Activated T-helper 1 cell treated with anti-CD3 and anti-CD28 coated beads, Interleukin-12 subunit alpha, Interleukin-12 subunit beta, Interleukin-2, Interleukin-4 antibody, amounts not matched to agents 30 ng/mL and 10 ng/mL and 1 ng/mL, durations not matched to agents 14 hours and 24 hours and 36 hours (primary cell): ENCODE measurements at regions of chr2 and their contacts with region 1.

Region 1: DNA sequence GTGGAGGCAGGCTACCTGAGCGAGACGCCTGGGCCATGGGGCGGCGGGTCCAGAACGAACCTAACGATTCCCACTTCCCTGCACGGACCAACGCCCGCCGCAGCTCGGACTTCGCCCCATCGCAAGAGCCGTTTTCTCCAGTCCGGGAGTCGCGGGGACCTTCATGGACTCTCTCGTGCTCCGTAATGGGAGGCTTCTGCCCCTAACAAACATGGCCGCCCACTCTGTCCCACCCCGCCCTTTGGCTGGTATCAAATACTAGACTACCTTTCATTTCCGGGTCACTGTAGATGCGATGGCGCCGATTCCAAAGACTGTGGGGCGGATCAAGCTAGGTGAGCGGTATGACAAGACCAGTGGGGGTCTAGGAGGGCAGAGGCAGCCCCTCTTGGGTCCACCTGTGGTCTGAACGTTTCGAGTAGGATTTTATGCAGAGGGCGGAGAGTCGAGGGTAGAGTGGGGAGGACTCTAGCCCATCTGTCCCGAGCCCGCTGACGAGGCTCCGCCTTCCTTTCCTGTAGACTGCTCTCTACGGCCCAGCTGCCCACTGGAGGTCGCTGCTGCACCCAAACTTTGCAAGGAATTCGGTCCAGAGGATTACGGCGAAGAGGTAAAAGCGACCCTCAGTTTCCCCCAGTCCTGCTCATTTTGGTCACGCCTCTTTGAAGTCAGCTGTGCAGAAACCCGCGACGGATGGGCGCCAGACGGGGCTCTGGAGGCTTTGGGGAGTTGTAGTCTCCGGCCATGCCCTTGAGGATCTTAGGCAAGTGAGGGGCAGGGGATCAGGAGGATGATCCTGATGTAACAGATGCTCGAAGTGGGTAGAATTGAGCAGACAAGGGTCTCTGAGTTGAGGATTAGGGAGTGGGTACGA is at the starts of genes CCDC142 and TTC31:
- DNase-seq: peak; percentile 89
- H3K4me3 Mint-ChIP-seq: peak within 1 kb of the TSS; percentile 99
- H3K27ac Mint-ChIP-seq: peak within 1 kb of the TSS; percentile 99
- H3K4me1 Mint-ChIP-seq: peaks cover 35% of the 10 kb centered on the region
- H3K27me3 Mint-ChIP-seq: no peaks in the 10 kb centered on the region
- total RNA-seq, gene CCDC142: 30.4 and 36.3 TPM in 2 replicates
- total RNA-seq, gene TTC31: 30.2 and 32.2 TPM in 2 replicates

Region 2: DNA sequence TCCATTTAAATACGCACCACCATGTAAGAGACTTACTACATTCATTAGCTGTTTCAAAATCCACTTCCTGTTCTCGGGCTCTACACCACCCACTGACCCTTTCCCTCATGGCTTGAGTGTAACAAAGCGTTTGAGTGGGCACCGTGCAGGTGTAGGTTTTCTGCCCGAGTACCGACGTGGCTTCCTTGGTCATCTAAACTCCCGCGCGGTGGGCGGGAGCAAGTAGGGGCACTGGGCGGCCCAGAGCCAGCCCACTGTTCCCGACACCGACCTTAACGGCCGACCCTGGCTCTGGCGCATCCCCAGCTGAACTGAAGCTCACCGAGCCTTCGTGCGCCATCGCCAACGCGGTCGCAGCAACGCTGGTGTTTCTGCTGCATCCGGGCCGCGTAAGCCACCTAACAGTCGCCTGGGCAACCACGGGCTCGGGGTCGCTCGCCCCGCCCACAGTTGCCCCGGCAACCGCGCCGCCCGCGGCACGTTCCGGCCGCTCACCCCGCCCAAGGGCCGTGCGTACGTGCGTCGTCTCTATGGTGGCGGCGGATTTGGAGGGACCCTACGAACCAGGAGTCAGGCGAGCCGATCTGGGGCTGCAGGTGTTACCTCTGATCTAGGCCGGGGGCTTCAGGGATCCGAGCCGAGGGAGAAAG is 61.7 kb before region 1 on chr2 and contains the starts of genes C2orf81 and WDR54:
- intact Hi-C with region 1: loop called (anchors 1 kb)
- DNase-seq: peak; percentile 95
- H3K4me3 Mint-ChIP-seq: peak within 1 kb of the TSS; percentile 98
- H3K27ac Mint-ChIP-seq: peak within 1 kb of the TSS; percentile 99
- H3K4me1 Mint-ChIP-seq: peaks cover 35% of the 10 kb centered on the region
- H3K27me3 Mint-ChIP-seq: no peaks in the 10 kb centered on the region
- total RNA-seq, gene C2orf81: 1.9 and 2.4 TPM in 2 replicates
- total RNA-seq, gene WDR54: 56.4 and 58.6 TPM in 2 replicates

Region 3: DNA sequence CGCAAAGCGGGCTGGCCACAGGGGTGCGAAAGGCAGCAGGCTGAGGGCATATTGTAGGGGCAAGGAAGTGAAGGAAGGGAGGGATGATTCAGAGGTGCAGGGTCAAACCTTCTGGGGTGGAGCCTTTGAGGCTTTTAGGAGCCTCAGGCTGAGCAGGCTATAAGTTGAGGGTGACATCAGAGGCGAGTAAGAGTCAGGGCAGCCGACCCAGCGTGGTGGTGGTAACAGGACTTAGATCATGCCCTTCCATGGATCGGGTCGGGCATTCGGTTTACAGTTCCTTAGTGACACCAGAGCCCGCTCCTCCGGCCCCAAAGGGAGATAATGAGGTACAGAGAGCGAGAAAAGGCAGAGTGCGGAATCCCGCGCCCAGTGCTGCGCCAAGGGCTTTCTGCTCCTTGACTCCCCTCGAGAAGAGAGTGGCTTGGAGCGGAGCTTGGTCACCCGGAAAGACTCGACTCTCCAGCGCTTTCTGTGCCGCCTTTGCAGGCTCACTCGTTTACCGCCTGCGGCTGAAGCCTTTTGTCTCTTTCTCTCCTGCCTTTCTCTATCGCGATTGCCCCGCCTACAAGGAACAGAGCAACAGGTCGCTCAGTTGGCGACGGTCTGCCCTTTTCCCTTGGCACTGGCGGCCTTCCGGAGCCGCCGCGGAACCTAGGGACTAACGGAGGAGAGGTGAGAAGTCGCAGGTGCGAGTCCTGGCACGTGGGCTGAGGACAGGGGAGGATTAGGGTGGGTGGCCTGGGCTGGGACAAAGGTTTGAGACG is 15.6 kb after region 1 on chr2:
- intact Hi-C with region 1: loop called (anchors 1 kb)
- DNase-seq: no peak
- H3K4me3 Mint-ChIP-seq: peak overlapping the region; percentile 93
- H3K27ac Mint-ChIP-seq: peak overlapping the region; percentile 85
- H3K4me1 Mint-ChIP-seq: peaks cover 48% of the 10 kb centered on the region
- H3K27me3 Mint-ChIP-seq: peaks cover 44% of the 10 kb centered on the region

Region 4: DNA sequence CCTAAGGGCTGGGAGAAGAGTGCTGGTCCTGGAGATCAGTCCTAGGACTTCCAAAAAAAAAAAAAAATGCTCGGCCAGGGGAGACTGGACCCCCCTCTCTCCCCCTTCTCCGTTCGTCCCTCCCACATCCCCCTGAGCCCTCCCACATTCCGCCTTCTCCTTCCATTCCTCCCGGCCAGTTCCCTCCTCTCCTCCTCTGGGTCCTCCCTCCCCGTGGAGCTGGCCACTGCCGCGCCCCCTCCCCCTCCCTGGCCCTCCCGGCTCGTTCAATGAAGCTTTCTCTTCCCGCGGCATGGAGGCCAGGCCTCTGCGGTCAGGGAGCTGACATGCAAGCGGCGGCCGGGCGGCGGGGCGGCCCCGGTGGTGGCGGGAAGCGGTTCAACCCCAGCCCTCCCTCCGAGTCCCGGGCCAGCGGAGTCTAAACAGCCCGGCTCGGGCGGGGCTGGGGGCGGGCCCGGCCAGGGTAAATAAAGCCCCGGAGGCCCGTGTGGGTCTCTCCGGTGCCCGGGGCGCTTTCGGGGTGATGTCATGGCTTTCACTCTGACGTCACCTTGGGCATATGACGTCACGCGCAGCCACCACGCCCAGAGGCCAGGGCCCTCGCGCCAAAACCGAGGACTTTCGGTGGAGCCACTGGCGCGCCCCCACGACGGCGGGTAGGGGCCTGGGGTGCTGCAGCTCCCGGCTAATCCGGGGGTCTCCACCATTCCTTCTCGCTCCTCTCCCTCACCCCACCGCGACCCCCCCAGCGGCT is 71.0 kb after region 1 on chr2 and contains the start of gene LOXL3:
- intact Hi-C with region 1: loop called (anchors 1 kb)
- DNase-seq: peak; percentile 77
- H3K4me3 Mint-ChIP-seq: peak within 1 kb of the TSS; percentile 95
- H3K27ac Mint-ChIP-seq: peak within 1 kb of the TSS; percentile 96
- H3K4me1 Mint-ChIP-seq: peaks cover 33% of the 10 kb centered on the region
- H3K27me3 Mint-ChIP-seq: peaks cover 11% of the 10 kb centered on the region
- total RNA-seq, gene LOXL3: 1.9 and 2.0 TPM in 2 replicates

Region 5: DNA sequence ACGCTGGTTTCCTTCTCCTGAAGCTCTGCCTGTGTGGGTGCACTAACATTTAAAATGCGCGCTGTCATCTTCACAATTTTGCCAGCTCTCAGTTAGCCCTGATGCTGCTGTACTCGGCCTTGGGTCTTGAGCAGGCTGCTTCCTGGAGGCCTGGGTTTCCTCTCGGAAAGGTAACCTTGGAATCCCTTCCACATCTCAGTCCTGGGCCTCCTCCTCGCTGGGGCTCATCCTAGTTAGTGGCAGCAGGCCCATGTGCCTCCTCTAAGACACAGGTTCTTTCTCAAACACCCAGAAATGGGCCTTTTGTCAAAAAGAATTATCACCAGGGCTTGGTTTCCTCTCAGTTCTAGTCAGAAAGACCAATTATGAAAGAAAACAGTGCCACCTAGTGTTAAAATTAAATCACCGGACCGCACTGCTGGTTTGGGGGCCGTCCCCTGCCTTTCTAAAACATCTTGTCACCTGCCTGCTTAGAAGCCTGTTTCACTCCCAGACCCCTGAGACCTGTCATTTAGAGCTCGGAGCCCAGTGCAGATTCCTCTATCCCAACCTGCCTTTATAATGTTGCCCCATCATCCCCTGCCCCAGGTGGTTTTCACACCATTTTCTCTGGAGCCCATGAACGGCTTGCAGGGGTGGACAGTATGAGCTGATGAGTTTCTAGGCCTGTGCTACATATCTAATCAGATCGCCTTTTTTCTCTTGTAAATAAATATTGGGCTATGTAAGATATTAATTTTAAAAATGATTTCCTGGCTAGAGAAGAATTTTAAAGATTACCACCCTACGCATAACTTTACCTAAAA is 393.2 kb after region 1 on chr2:
- intact Hi-C with region 1: loop called (anchors 1 kb)
- DNase-seq: peak; percentile 21
- H3K4me3 Mint-ChIP-seq: no peak overlapping the region
- H3K27ac Mint-ChIP-seq: peak overlapping the region; percentile 40
- H3K4me1 Mint-ChIP-seq: peaks cover 7% of the 10 kb centered on the region
- H3K27me3 Mint-ChIP-seq: no peaks in the 10 kb centered on the region